Heart left ventricle (tissue), 16 donors: ENCODE measurements at regions of chr7 and their contacts with region 1.

Region 1: GRCh38 chr7:80197627-80198026 is 63.0 kb downstream of the GNAI1 start:
- DNase-seq: no peak
- ATAC-seq: no peak
- H3K4me3 ChIP-seq: no peak overlapping the region
- H3K27ac ChIP-seq: no peak overlapping the region
- H3K4me1 ChIP-seq: peaks cover 0 to 10% (median 0%) of the 10 kb centered on the region in 12 donors
- H3K27me3 ChIP-seq: no peaks in the 10 kb centered on the region
- CTCF ChIP-seq: no peak
- POLR2A ChIP-seq: no peak

Region 2: DNA sequence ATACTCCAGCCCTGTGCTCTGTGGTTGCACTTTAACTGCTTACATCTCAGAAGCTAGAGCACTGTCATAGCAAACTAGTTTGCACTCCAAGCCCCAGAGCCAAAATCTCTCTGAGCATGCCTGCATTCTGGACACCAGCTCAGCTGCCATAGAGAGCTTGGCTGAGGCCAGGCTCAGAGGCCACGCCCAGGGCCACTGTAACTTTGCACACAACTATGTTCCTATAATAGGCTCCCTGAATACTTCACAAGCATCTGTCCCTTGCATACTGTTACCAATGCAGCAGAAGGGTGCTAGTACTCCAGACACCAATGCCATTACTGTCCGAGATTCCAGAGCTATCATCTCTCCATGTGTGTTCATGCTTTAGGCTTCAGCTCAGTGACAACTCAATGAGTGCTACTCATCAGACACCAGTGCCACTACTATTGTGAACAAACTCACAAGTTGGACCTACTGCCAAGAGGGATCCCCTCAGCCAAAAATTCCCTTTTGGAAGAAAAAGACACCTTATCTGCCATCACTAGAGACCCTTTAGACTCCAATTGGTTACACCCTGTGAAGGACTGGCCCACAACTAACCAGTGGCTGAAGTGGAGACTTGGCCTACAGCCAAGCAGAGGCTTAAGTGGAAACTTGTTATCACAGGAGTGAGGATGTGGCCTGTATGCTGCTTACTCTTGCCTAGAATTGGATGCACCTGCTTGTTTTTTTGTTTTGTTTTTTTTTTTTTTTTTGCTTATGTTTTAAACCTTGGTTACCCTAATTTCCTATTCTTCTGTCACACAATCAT is 532.5 kb before region 1 on chr7:
- intact Hi-C with region 1: no loop called
- DNase-seq: peak in 3 of 5 donors; percentile 22 to 54 (median 42)
- ATAC-seq: peak; percentile 75 to 97 (median 81)
- H3K4me3 ChIP-seq: no peak overlapping the region
- H3K27ac ChIP-seq: no peak overlapping the region
- H3K4me1 ChIP-seq: no peaks in the 10 kb centered on the region
- H3K27me3 ChIP-seq: no peaks in the 10 kb centered on the region
- CTCF ChIP-seq: no peak
- POLR2A ChIP-seq: no peak

Region 3: GRCh38 chr7:80134536-80135320 is 62.9 kb before region 1 on chr7 and contains the start of gene GNAI1:
- intact Hi-C with region 1: loop called in 2 of 10 experiments (anchors 5 kb)
- DNase-seq: peak; percentile 66 to 84 (median 72)
- ATAC-seq: peak; percentile 48 to 93 (median 86)
- H3K4me3 ChIP-seq: peak within 1 kb of the TSS; percentile 62 to 99 (median 97)
- H3K27ac ChIP-seq: peak within 1 kb of the TSS; percentile 63 to 94 (median 86)
- H3K4me1 ChIP-seq: peaks cover 0 to 27% (median 11%) of the 10 kb centered on the region in 12 donors
- H3K27me3 ChIP-seq: peaks cover 0 to 5% (median 0%) of the 10 kb centered on the region in 9 donors
- CTCF ChIP-seq: peak in 10 of 12 donors; percentile 1 to 62 (median 47)
- POLR2A ChIP-seq: peak in 1 of 2 donors; percentile 70
- total RNA-seq, gene GNAI1: 9.9 to 26.1 (median 16.5) TPM